A673 (cell line): ENCODE measurements at regions of chr9 and their contacts with region 1.

Region 1: GRCh38 chr9:12833701-12834100 is 58.9 kb downstream of the LURAP1L start:
- DNase-seq: no peak
- H3K4me3 ChIP-seq: no peak overlapping the region
- H3K27ac ChIP-seq: no peak overlapping the region
- H3K4me1 ChIP-seq: no peaks in the 10 kb centered on the region
- H3K27me3 ChIP-seq: no peaks in the 10 kb centered on the region
- CTCF ChIP-seq: no peak

Region 2: GRCh38 chr9:12819436-12820185 is 14.1 kb before region 1 on chr9:
- CTCF ChIA-PET with region 1: no interaction called
- POLR2A ChIA-PET with region 1: no interaction called
- intact Hi-C with region 1: loop called (anchors 2 kb)
- DNase-seq: peak; percentile 50
- H3K4me3 ChIP-seq: no peak overlapping the region
- H3K27ac ChIP-seq: no peak overlapping the region
- H3K4me1 ChIP-seq: peaks cover 15% of the 10 kb centered on the region
- H3K27me3 ChIP-seq: no peaks in the 10 kb centered on the region
- CTCF ChIP-seq: peak; percentile 66